GM10248 (cell line): ENCODE measurements at regions of chr6 and their contacts with region 1.

Region 1: GRCh38 chr6:36615018-36615761 is 21.0 kb downstream of the SRSF3 start:
- DNase-seq: peak; percentile 63
- CTCF ChIP-seq: peak; percentile 54

Region 2: DNA sequence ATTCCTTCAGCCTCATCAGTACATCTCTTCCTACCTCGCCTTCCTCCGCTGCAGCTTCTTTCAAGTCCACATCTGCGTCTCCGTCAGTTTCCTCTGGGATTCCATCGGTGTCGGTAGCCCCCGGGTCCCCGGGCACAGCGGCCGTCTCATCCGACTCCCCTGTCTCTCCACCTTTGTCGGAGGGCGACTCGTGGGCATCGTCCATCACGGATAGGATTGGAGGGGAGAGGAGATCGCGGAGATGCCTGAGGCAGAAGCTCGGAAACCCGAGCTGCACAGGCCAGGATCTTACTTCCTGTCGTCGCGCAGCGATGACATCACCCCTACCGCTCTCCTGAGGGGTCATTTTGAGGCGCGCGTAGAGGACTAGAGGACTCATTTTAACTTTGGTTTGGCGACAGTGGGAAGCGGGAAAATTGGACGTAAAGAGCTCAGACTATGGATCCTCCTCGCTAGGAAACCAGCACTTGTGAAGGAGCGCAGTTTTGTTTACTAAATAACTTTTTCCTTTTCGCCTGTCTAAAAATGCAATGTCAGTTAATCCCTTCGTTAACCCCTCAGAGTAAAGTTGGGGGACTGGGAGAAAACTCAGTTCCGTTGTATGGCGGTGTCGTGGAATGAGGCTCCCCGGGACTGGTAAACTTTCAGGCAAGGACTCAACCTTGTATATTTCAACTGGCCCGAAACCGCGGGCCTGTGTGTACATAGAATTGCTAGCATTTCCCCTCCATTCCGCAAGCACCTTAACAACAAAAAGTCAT is 1727.3 kb before region 1 on chr6 and contains the start of gene TAF11:
- CTCF ChIA-PET with region 1: no interaction called
- POLR2A ChIA-PET with region 1: no interaction called
- DNase-seq: peak; percentile 89
- CTCF ChIP-seq: no peak

Region 3: DNA sequence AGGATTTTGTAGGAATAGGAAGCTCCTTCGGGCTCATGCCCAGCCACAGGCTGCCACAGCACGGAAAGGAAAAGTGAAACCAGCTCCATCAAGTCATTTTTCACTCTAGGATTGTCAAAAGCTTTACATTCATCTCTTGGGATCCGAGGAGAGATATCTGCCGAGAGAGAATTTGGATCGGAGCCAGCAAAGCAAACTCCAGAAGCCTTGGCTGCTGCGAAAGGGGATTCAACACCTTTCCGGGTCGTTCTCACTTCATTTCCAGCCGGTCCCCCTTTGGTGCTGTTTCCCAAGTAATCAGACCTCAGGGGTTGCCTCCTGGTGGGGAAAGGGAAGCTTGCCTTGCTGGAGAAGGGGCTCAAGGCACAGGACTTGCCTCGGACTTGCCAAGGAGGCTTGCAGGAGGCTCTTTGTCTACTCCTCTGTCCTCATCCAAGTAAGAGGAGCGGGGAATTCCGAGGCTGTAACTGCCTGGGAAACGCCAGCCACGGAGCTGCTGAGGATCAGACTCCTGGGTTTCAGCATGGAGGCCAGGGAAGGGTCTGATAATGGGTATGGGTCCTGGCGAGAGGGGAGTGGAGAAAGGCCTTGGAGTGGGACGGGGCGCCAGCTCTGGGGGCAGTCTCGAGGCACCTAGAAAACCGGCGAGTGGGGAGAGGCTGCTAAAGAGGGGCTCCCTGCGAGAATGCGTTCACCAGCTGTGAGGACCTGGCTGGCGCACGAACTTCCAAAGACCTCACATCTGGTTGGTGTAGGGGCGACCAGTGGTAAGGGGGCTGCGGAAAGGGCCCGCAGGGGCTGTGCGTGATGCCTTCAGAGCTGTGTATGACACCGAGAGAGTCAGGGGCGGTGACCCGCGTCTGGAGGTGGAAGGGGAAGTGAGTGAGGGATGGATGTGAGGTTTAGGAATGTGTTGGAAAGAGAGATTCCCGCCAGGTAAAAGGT is 228.4 kb before region 1 on chr6:
- CTCF ChIA-PET with region 1: no interaction called
- POLR2A ChIA-PET with region 1: no interaction called
- DNase-seq: peak; percentile 49
- CTCF ChIP-seq: no peak

Region 4: GRCh38 chr6:36631326-36632011 is 16.3 kb after region 1 on chr6:
- CTCF ChIA-PET with region 1: interaction called, 37 read pairs
- POLR2A ChIA-PET with region 1: interaction called, 3 read pairs
- DNase-seq: no peak
- CTCF ChIP-seq: no peak

Region 5: GRCh38 chr6:36666726-36667591 is 51.8 kb after region 1 on chr6:
- CTCF ChIA-PET with region 1: interaction called, 11 read pairs
- POLR2A ChIA-PET with region 1: interaction called, 11 read pairs
- DNase-seq: peak; percentile 76
- CTCF ChIP-seq: no peak

Region 6: GRCh38 chr6:36685936-36686667 is 70.9 kb after region 1 on chr6:
- CTCF ChIA-PET with region 1: interaction called, 20 read pairs
- POLR2A ChIA-PET with region 1: interaction called, 3 read pairs
- DNase-seq: no peak
- CTCF ChIP-seq: no peak

Region 7: GRCh38 chr6:36731622-36732309 is 116.6 kb after region 1 on chr6:
- CTCF ChIA-PET with region 1: interaction called, 14 read pairs
- POLR2A ChIA-PET with region 1: no interaction called
- DNase-seq: no peak
- CTCF ChIP-seq: peak; percentile 3

Region 8: DNA sequence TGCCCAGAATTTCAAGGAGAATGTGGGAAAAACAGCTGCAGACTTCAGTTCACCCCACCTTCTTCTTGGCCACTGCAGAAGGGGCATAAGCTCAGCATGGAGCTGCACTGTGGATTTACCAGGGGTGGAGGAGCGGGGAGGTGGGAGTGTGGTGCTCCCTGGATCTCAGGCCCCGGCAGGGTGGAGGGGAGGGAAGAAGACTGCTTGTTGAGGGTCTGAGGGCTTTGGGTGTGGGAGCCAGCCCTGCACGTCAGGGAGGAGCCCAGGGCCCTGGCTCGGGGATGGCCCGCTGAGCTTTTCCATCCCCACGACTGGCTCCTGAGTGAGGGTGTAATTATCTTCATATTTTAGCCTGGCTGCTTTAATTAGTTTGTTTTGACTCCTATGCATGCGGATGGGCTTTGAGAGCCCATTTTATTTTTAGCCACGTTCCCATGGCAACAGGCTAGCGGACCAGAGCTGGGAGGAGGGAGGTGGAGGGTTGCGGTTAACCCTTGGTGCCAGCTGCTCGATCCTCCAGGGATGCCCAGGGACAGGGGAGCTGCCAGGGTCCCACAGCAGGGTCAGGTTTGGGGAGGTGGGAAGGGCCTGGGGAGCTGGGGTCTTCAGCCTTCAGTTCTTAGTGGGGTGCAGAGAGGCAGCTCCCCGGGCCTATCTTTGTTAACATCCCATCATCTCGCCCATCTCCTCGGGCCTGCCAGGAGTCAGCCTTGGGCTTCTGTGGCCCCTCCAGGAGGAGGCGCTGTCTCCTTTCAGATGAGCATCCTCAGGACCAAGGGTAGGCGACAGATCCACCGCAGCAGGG is 150.6 kb after region 1 on chr6:
- CTCF ChIA-PET with region 1: interaction called, 86 read pairs
- POLR2A ChIA-PET with region 1: no interaction called
- DNase-seq: peak; percentile 90
- CTCF ChIP-seq: peak; percentile 98